HEK293T (cell line): ENCODE measurements at regions of chr2 and their contacts with region 1.

Region 1: GRCh38 chr2:27123302-27124231 is at the start of gene ABHD1:
- DNase-seq: peak; percentile 62

Region 2: DNA sequence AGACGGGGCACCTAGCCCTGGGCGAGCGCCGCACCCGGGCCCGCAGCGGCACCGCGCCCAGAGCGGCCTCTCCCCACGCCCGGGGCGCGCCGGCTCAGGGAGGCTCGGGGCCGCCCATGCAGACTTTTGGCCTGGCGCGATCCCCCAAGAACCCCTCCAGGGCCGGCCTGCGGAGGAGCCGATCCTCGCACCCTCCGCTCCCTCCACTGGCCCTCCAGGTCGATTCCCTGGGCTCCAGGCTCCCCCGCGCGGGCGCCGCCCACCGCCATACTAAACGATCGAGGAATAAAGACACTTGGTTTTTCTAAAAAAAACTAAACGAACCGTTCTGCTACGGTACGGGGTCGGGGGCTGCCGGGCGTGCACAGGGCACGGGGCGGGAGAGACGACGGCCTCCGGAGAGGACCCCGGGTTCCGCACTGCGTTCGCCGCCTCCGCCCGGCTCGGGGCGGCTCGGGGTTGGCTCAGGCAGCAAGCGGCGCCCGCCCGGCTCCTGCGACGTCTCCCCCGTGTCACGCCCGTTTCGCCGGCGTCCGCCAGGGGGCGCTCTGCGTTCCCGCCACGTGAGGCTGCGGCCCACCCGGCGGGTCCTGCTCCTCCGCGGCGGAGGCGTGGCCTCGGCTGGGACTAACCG is 37.4 kb before region 1 on chr2:
- CTCF ChIA-PET with region 1: interaction called, 5 read pairs
- POLR2A ChIA-PET with region 1: interaction called, 11 read pairs
- DNase-seq: peak; percentile 98

Region 3: GRCh38 chr2:27133905-27134780 is 10.6 kb after region 1 on chr2 and contains the start of gene PREB:
- CTCF ChIA-PET with region 1: no interaction called
- POLR2A ChIA-PET with region 1: interaction called, 42 read pairs
- DNase-seq: peak; percentile 100